Naive thymus-derived CD8-positive, alpha-beta T cell (primary cell): ENCODE measurements at regions of chr7 and their contacts with region 1.

Region 1: GRCh38 chr7:24819916-24820689 is 62.8 kb upstream of the GSDME start:
- DNase-seq: peak; percentile 36 to 84 (median 68)
- ATAC-seq: peak; percentile 25 to 38
- H3K4me3 Mint-ChIP-seq: peak overlapping the region; percentile 51 to 91 (median 88)
- H3K27ac Mint-ChIP-seq: peak overlapping the region; percentile 80 to 98 (median 94)
- H3K4me1 Mint-ChIP-seq: peaks cover 17 to 45% (median 28%) of the 10 kb centered on the region in 4 donors
- H3K27me3 Mint-ChIP-seq: no peaks in the 10 kb centered on the region

Region 2: GRCh38 chr7:24979863-24980533 is 159.9 kb after region 1 on chr7 and contains the start of gene OSBPL3:
- POLR2A ChIA-PET with region 1: interaction called, 27 read pairs
- DNase-seq: peak; percentile 86 to 97 (median 94)
- ATAC-seq: peak; percentile 77 to 81
- H3K4me3 Mint-ChIP-seq: peak within 1 kb of the TSS; percentile 93 to 98 (median 97)
- H3K27ac Mint-ChIP-seq: peak within 1 kb of the TSS; percentile 58 to 96 (median 90)
- H3K4me1 Mint-ChIP-seq: peaks cover 27 to 61% (median 54%) of the 10 kb centered on the region in 4 donors
- H3K27me3 Mint-ChIP-seq: no peaks in the 10 kb centered on the region
- polyA plus RNA-seq, gene OSBPL3: 3.4 to 5.3 (median 5.0) TPM

Region 3: GRCh38 chr7:25069900-25070443 is 249.9 kb after region 1 on chr7:
- POLR2A ChIA-PET with region 1: interaction called, 14 read pairs
- DNase-seq: peak in 9 of 10 donors; percentile 14 to 72 (median 45)
- ATAC-seq: peak; percentile 46 to 54
- H3K4me3 Mint-ChIP-seq: peak overlapping the region in 2 of 10 donors; percentile 20 to 54
- H3K27ac Mint-ChIP-seq: peak overlapping the region in 1 of 10 donors; percentile 76
- H3K4me1 Mint-ChIP-seq: peaks cover 0 to 5% (median 0%) of the 10 kb centered on the region in 4 donors
- H3K27me3 Mint-ChIP-seq: peaks cover 0 to 3% (median 0%) of the 10 kb centered on the region in 5 donors